Activated CD4-positive, alpha-beta T cell treated with anti-CD3 and anti-CD28 coated beads, Interleukin-2, amount 10 ng/mL, durations not matched to agents 7 days and 5 days (primary cell): ENCODE measurements at regions of chr4 and their contacts with region 1.

Region 1: DNA sequence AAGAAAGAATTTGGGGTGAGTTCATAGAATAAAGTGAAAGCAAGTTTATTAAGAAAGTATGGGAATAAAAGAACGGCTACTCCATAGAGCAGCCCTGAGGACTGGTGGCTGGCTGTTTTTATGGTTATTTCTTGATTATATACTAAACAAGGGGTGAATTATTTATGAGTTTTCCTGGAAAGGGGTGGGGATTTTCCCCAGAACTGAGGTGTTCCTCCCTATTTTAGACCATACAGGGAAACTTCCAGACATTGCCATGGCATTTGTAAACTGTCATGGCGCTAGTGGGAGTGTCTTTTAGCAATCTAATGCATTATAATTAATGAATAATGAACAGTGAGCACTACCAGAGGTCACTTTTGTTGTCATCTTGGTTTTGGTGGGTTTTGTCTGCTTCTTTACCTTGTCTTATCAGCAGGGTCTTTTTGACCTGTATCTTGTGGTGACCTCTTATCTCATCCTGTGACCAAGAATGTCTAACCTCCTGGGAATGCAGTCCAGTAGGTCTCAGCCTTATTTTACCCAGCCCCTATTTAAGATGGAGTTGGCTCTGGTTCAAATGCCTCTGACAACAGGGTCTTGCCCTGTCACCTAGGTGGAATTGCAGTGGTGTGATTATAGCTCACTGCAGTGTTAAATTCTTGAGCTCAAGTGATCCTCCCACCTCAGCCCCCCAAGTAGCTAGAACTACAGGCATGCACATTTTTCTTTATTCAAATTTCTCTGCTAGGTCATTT is 27.1 kb downstream of the RAPGEF2 start:
- DNase-seq: no peak
- H3K4me3 Mint-ChIP-seq: no peak overlapping the region
- H3K27ac Mint-ChIP-seq: no peak overlapping the region
- H3K4me1 Mint-ChIP-seq: peaks cover 14% of the 10 kb centered on the region
- H3K27me3 Mint-ChIP-seq: no peaks in the 10 kb centered on the region

Region 2: GRCh38 chr4:159042097-159042605 is 87.8 kb before region 1 on chr4:
- CTCF ChIA-PET with region 1: no interaction called
- POLR2A ChIA-PET with region 1: interaction called, 10 read pairs
- DNase-seq: no peak
- H3K4me3 Mint-ChIP-seq: no peak overlapping the region
- H3K27ac Mint-ChIP-seq: no peak overlapping the region
- H3K4me1 Mint-ChIP-seq: peaks cover 3% of the 10 kb centered on the region
- H3K27me3 Mint-ChIP-seq: peaks cover 10% of the 10 kb centered on the region